MCF 10A (cell line): ENCODE measurements at regions of chr1 and their contacts with region 1.

Region 1: DNA sequence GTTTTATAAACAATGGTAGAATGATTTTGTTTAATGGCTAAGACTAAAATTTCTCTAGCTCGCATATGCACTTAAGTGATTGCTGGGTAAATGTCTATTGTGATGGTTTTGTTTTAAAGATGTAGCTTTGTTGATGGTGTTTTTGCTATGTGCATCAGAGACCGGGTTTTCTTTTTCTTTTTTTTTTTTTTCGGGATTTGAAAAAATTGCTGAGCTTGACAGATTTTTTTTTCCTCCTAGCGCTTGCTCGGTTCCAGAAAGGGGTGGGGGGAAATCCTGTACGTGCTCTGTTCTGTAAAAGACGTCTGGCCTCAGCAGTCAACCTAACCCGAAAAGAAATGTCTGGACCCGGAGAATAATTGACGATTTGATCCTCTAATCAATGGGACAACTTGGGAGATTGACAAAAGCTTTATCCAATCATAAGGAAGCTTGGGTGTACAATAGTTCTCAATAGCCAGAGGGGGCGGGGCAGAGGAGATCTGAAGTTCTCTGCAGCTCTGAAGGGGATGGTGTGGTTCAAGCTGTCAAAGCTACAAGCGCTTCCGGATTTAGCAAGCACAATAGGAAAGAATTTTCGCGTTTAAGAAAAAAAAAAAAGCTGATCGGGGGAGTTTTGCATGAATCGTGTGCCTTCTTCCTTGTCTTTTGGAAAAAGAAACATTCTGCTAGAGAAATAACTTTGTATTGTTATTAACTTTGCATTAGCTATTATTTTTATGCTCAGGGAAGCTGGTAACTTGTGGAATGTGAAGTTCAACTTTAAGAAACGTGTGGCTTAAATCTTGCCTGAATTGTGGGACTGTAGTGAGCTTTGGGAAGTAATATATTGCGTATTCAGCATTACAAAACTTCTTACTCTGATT is 4.5 kb upstream of the NFIA start:
- DNase-seq: peak; percentile 100
- H3K4me3 Mint-ChIP-seq: peak overlapping the region; percentile 94
- H3K27ac Mint-ChIP-seq: peak overlapping the region; percentile 96
- H3K4me1 Mint-ChIP-seq: peaks cover 42% of the 10 kb centered on the region
- H3K27me3 Mint-ChIP-seq: no peaks in the 10 kb centered on the region
- CTCF ChIP-seq: no peak

Region 2: GRCh38 chr1:61056573-61057439 is 21.1 kb before region 1 on chr1:
- CTCF ChIA-PET with region 1: interaction called, 77 read pairs
- POLR2A ChIA-PET with region 1: interaction called, 369 read pairs
- intact Hi-C with region 1: loop called (anchors 1 kb)
- DNase-seq: peak; percentile 63
- H3K4me3 Mint-ChIP-seq: peak overlapping the region; percentile 86
- H3K27ac Mint-ChIP-seq: peak overlapping the region; percentile 73
- H3K4me1 Mint-ChIP-seq: peaks cover 14% of the 10 kb centered on the region
- H3K27me3 Mint-ChIP-seq: no peaks in the 10 kb centered on the region
- CTCF ChIP-seq: no peak

Region 3: GRCh38 chr1:61111084-61111788 is 33.3 kb after region 1 on chr1:
- CTCF ChIA-PET with region 1: no interaction called
- POLR2A ChIA-PET with region 1: interaction called, 25 read pairs
- intact Hi-C with region 1: no loop called
- DNase-seq: no peak
- H3K4me3 Mint-ChIP-seq: no peak overlapping the region
- H3K27ac Mint-ChIP-seq: peak overlapping the region; percentile 49
- H3K4me1 Mint-ChIP-seq: peaks cover 30% of the 10 kb centered on the region
- H3K27me3 Mint-ChIP-seq: no peaks in the 10 kb centered on the region
- CTCF ChIP-seq: no peak

Region 4: GRCh38 chr1:61149010-61149860 is 71.3 kb after region 1 on chr1:
- CTCF ChIA-PET with region 1: interaction called, 3 read pairs
- POLR2A ChIA-PET with region 1: interaction called, 154 read pairs
- intact Hi-C with region 1: no loop called
- DNase-seq: no peak
- H3K4me3 Mint-ChIP-seq: no peak overlapping the region
- H3K27ac Mint-ChIP-seq: no peak overlapping the region
- H3K4me1 Mint-ChIP-seq: peaks cover 6% of the 10 kb centered on the region
- H3K27me3 Mint-ChIP-seq: no peaks in the 10 kb centered on the region
- CTCF ChIP-seq: no peak

Region 5: DNA sequence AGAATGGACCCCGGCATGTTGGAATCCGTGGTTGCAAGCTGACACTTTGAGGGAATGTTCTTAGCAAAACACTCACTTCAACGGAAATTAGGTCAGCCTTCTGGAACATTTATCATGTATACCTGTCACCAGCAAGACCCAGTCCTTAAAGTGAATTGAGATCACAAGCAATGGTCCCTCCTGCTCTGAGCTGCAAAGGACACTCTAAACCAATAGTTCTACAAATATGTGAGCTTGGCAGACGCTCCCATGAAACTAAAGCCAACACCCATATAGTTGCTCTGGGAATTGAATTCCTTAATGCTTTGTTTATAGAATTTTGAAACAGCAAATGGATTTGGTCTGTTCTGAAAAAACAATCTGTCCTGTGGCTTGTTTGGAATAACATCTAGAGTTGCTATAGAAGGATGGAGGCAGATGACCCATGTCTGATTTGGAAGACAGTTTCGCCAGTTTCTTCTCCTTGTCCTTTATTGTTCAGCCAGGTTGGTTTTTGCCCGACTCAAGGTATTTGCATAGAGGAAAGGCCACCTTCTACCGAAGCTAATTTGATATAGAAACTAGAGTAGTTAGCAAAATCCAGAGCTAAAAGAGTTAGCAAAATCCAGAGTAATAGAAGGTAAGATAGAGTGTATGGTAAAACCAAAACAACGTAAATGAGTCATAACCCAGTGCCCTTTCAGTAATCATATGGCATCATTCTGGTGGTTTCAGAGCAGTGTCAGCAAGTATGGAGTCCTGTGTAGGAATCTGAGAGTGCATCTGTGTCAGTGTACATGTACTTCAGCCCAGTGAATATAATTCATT is 240.6 kb after region 1 on chr1:
- CTCF ChIA-PET with region 1: no interaction called
- POLR2A ChIA-PET with region 1: interaction called, 55 read pairs
- intact Hi-C with region 1: loop called (anchors 1 kb)
- DNase-seq: peak; percentile 82
- H3K4me3 Mint-ChIP-seq: peak overlapping the region; percentile 64
- H3K27ac Mint-ChIP-seq: peak overlapping the region; percentile 99
- H3K4me1 Mint-ChIP-seq: peaks cover 38% of the 10 kb centered on the region
- H3K27me3 Mint-ChIP-seq: no peaks in the 10 kb centered on the region
- CTCF ChIP-seq: no peak